Aorta (tissue), 5 donors: ENCODE measurements at regions of chr14 and their contacts with region 1.

Region 1: DNA sequence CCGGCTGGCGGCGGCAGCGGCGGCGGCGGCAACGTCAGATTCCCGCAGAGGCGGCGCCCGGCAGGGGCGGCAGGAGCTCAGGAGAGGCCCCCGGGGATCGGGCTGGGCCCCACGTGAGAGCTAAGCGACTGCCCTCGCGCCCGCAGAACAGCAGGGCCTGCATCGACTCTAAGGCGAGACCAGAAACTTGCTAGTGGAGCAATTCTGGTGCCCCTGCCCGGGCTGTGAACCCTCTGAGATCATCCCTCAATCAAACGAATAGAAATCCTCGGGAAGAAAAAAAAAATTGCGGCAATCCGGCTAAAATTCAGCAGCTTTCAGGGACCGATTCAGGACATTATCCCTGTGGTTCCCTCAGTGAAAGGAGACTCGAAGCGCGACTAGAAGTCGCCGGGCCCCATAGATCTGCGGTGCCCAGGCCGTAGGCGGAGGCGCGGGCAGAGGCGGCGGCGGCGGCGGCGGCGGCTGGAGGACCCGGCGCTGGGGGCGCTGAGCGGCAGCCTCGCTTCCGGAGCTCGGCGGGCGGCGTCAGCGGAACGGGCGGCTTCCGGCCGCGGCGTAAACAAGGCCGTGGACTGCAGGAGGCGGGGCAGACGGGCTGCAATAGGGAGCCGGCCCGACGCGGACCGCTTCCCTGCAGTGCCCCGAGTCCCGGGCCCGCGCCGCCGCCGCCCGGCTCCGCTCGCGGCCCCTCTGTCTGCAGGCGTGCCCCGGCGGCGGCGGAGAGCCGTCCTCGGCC is at the start of gene KLHDC2:
- DNase-seq: peak; percentile 95 to 96
- ATAC-seq: peak; percentile 95
- H3K4me3 ChIP-seq: peak within 1 kb of the TSS; percentile 95 to 96
- H3K27ac ChIP-seq: peak within 1 kb of the TSS; percentile 89 to 96
- H3K4me1 ChIP-seq: peaks cover 0 to 3% of the 10 kb centered on the region in 2 donors
- H3K27me3 ChIP-seq: no peaks in the 10 kb centered on the region
- total RNA-seq, gene KLHDC2: 49.1 to 56.3 TPM

Region 2: GRCh38 chr14:49641697-49642129 is 126.0 kb before region 1 on chr14:
- intact Hi-C with region 1: no loop called
- DNase-seq: no peak
- ATAC-seq: no peak
- H3K4me3 ChIP-seq: no peak overlapping the region
- H3K27ac ChIP-seq: no peak overlapping the region
- H3K4me1 ChIP-seq: no peaks in the 10 kb centered on the region
- H3K27me3 ChIP-seq: no peaks in the 10 kb centered on the region

Region 3: DNA sequence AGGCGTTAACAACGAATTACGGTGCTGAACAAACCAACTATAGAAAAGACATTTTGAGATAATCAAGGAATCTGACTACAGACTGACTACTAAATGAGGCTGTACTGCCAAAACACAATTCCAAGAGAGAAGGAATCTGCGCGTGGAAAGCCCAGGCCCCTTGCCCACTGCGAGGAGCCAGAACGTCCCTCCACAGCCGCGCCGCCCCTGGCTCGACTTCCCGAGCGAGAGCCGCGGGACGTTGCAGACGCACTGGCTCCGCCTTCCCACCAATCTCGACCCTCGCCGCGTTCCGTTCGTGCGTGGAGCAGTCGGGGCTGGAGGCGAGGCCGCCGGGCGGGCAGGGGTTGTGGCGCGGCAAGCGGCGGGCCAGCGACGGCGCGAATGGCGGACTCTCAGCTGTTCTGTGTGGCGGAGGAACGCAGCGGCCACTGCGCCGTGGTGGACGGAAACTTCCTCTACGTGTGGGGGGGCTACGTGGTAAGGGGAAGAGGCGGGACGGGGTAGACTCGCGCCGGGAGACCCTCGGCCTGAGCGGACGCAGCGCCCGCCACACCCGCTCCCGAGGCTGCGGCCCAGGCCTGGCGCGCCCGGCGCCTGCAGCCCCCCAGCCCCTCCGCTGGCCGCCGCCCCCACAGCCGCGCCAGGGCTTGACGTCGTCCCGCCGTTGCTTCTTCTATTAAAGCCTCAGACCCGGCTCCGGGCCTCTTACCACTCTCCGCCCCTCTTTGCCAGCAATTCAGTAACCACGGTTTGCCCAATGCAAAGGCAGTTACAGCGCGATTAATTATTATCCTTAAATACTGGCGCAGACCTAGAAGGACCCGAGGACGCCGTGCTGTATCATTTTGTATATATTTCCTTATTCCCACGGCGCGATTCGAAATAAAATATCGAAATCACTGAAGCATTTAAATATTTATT is 74.7 kb before region 1 on chr14 and contains the start of gene KLHDC1:
- intact Hi-C with region 1: loop called (anchors 1 to 5 kb)
- DNase-seq: peak; percentile 94 to 95
- ATAC-seq: peak; percentile 95
- H3K4me3 ChIP-seq: peak within 1 kb of the TSS; percentile 62 to 69
- H3K27ac ChIP-seq: peak within 1 kb of the TSS; percentile 48 to 62
- H3K4me1 ChIP-seq: no peaks in the 10 kb centered on the region
- H3K27me3 ChIP-seq: no peaks in the 10 kb centered on the region
- total RNA-seq, gene KLHDC1: 10.1 to 19.4 TPM

Region 4: DNA sequence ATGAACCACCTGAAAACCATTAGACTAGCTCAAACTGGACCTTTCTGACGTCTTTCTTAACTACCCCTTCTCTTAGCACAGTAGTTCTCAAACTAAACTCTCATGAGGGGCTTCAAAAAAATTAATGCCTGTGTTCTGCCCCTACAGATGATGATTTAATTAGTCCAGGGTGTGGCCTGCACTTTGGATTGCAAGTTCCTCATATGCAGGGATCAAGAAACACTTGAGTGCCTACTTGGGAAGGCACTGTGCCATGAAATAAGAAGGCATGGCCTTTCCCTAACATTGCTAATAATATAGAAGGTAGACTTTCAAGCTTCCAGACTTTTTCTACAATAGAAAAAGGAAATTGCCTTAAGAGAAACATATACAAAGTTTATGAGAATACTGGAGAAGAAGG is 22.5 kb before region 1 on chr14:
- intact Hi-C with region 1: no loop called
- DNase-seq: no peak
- ATAC-seq: no peak
- H3K4me3 ChIP-seq: no peak overlapping the region
- H3K27ac ChIP-seq: no peak overlapping the region
- H3K4me1 ChIP-seq: peaks cover 0 to 1% of the 10 kb centered on the region in 2 donors
- H3K27me3 ChIP-seq: no peaks in the 10 kb centered on the region